Activated naive CD4-positive, alpha-beta T cell treated with anti-CD3 and anti-CD28 coated beads for 36 hours (primary cell): ENCODE measurements at regions of chr11 and their contacts with region 1.

Region 1: GRCh38 chr11:74988541-74989260 is at the start of gene NEU3:
- DNase-seq: peak; percentile 90
- H3K4me3 Mint-ChIP-seq: peak within 1 kb of the TSS; percentile 95
- H3K27ac Mint-ChIP-seq: peak within 1 kb of the TSS; percentile 79
- H3K4me1 Mint-ChIP-seq: peaks cover 26% of the 10 kb centered on the region
- H3K27me3 Mint-ChIP-seq: no peaks in the 10 kb centered on the region
- total RNA-seq, gene NEU3: 16.4 TPM

Region 2: GRCh38 chr11:75022759-75023396 is 34.2 kb after region 1 on chr11:
- CTCF ChIA-PET with region 1: no interaction called
- intact Hi-C with region 1: loop called (anchors 2 kb)
- DNase-seq: peak; percentile 87
- H3K4me3 Mint-ChIP-seq: no peak overlapping the region
- H3K27ac Mint-ChIP-seq: no peak overlapping the region
- H3K4me1 Mint-ChIP-seq: no peaks in the 10 kb centered on the region
- H3K27me3 Mint-ChIP-seq: no peaks in the 10 kb centered on the region

Region 3: DNA sequence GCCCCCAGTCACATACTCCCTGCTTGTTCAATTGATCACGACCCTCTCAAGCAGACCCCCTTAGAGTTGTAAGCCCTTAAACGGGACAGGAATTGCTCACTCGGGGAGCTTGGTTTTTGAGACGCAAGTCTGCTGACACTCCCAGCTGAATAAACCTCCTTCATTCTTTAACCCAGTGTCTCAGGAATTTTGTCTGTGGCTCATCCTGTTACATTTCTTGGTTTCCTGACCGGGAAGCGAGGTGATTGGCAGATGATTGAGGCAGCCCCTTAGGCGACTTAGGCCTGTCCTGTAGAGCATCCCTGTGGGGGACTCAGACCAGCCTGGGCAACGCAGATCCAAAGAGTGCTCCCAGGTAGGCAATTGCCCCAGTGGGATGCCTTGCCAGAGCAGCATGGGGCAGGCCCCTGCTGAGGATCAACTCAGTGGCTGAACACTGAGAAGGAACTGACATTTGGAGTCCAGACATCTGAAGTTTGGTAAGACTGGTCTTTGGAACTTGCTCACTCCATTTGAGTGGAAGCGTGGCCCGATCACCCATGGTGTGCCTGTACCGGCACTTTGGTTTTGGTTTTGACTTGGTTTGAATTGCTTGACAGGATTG is 51.6 kb after region 1 on chr11:
- CTCF ChIA-PET with region 1: no interaction called
- intact Hi-C with region 1: no loop called
- DNase-seq: no peak
- H3K4me3 Mint-ChIP-seq: no peak overlapping the region
- H3K27ac Mint-ChIP-seq: no peak overlapping the region
- H3K4me1 Mint-ChIP-seq: no peaks in the 10 kb centered on the region
- H3K27me3 Mint-ChIP-seq: peaks cover 3% of the 10 kb centered on the region